Ovary (tissue), 10 donors: ENCODE measurements at regions of chr6 and their contacts with region 1.

Region 1: DNA sequence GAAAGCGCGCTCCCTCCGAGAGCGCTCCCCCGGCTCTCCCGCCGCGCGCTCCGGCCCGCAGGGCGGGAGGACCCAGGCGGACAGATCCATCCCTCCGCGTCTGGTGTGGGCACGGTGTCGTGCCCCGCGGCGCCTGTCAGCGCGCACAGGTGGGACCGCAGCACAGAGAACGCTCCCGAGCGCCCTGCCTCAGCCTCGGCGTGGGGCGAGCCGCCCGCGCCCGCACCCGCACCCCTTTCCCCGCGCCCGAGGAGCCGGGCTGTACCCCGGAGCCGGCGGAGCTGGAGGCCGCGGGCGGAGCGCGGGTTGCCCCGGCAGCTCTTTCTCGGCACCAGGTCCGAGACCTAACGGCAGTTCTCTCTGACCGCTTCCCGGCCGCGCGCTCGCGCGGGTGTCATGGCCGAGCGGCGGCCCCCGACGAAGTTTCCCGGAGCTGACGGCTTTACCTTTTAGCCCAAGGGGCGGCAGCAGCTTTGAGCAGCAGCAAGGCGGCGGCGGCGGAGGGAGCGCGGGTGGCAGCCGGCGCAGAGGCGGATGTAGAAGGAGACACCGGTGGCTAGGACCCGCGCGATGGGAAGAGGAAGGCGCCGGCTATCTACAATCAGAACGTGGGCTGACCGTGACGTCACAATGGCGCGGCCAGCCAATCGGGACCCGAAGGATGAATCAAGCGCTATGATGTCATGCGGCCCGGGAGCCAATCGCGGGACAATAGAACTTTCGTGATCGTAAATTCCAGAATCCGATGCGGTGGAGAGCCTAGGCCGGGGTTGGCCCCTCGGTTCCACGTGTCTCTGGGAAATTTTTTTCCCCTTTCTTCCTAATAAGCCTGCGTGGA is at the start of gene ELOVL5:
- DNase-seq: peak; percentile 98 to 99 (median 99)
- H3K4me3 ChIP-seq: peak within 1 kb of the TSS; percentile 63
- H3K27ac ChIP-seq: peak within 1 kb of the TSS; percentile 97
- H3K4me1 ChIP-seq: no peaks in the 10 kb centered on the region
- H3K27me3 ChIP-seq: no peaks in the 10 kb centered on the region
- CTCF ChIP-seq: no peak
- EP300 ChIP-seq: no peak
- POLR2A ChIP-seq: peak; percentile 91
- total RNA-seq, gene ELOVL5: 14.7 to 84.4 (median 41.8) TPM

Region 2: DNA sequence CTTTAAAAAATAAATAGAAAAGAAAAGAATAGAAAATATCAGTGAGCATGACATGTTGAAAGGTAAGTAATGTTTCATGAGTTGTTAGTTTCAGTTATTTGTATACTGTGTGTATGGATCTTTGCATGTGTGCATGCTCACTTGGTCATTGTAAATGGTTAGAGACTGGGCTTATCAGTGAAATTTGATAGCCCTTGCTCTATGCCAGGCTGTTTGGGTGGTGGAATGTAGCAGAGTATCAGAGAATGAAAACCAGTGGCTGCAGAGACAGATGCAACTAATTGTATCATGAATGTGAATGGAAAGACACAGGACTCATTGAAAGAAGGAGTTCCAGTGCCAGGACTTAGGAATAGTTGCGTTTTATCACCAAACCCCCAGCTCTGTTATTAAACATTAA is 589.5 kb before region 1 on chr6:
- intact Hi-C with region 1: no loop called
- DNase-seq: no peak
- H3K4me3 ChIP-seq: no peak overlapping the region
- H3K27ac ChIP-seq: no peak overlapping the region
- H3K4me1 ChIP-seq: no peaks in the 10 kb centered on the region
- H3K27me3 ChIP-seq: no peaks in the 10 kb centered on the region
- CTCF ChIP-seq: no peak
- EP300 ChIP-seq: no peak
- POLR2A ChIP-seq: no peak

Region 3: DNA sequence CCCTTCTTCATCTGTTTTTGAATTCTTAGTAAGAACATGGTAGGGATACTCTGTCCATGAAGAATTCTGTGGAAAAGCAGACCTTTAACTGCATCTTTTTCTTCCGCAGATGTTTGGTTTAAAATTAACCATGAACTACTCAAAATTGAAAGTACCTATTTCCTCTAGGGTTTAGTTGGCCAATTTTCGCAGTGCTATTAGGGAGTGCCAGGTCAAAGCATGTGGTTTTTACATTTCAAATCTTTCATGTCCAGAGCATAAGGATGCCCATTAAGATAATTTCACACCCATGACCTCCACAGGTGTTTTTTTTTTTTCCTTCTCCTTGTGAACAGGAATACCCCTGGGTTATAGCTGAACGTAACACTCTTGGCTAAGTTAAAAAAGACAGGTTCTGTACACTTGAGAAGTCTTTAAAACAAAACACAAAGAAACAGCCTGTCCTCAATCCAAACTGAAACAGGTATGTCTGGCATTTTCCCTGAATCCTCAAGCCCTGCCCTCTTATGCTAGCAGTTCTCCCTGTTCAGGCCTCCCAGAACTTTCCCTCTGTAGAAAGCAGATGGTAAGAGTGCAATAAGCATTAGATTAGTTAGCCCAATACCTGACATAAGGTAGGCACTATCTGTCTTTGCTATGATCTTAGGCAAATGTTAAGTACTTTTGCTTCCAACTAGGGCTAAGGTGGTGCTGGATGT is 66.9 kb before region 1 on chr6:
- intact Hi-C with region 1: loop called in 1 of 4 experiments (anchors 2 kb)
- DNase-seq: no peak
- H3K4me3 ChIP-seq: no peak overlapping the region
- H3K27ac ChIP-seq: peak overlapping the region in 1 of 2 donors; percentile 40
- H3K4me1 ChIP-seq: peaks cover 9% of the 10 kb centered on the region
- H3K27me3 ChIP-seq: no peaks in the 10 kb centered on the region
- CTCF ChIP-seq: no peak
- EP300 ChIP-seq: no peak
- POLR2A ChIP-seq: no peak

Region 4: DNA sequence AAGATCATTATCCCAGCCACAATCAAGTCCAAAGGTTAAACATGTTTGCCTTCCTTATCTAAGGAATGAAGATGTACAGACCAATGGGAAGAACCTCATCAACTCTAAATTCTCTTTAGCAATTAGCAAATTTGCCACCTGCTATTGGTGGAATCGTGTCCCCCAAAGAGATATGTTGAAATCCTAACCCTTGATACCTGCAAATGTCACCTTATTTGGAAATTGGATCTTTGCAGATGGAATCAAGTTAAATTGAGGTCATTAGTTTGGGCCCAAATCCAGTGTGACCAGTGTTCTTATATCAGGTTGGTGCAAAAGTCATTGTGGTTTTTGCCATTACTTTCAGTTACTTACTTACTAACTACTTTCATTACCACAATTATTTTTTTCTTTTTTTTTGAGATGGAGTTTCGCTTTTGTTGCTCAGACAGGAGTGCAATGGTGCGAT is 285.6 kb after region 1 on chr6:
- intact Hi-C with region 1: no loop called
- DNase-seq: no peak
- H3K4me3 ChIP-seq: no peak overlapping the region
- H3K27ac ChIP-seq: no peak overlapping the region
- H3K4me1 ChIP-seq: no peaks in the 10 kb centered on the region
- H3K27me3 ChIP-seq: no peaks in the 10 kb centered on the region
- CTCF ChIP-seq: no peak
- EP300 ChIP-seq: no peak
- POLR2A ChIP-seq: no peak